BJ (cell line): ENCODE measurements at regions of chr6 and their contacts with region 1.

Region 1: GRCh38 chr6:89110284-89110683 is 7.6 kb downstream of the SRSF12 start:
- DNase-seq: no peak
- H3K4me3 ChIP-seq: no peak overlapping the region
- H3K27me3 ChIP-seq: no peaks in the 10 kb centered on the region
- CTCF ChIP-seq: no peak

Region 2: GRCh38 chr6:89098461-89098860 is 11.8 kb before region 1 on chr6:
- CTCF ChIA-PET with region 1: interaction called, 3 read pairs
- POLR2A ChIA-PET with region 1: interaction called, 19 read pairs
- DNase-seq: no peak
- H3K4me3 ChIP-seq: no peak overlapping the region
- H3K27me3 ChIP-seq: no peaks in the 10 kb centered on the region; the same call in 1 of the 2 replicates
- CTCF ChIP-seq: no peak

Region 3: GRCh38 chr6:89122625-89123024 is 12.3 kb after region 1 on chr6:
- CTCF ChIA-PET with region 1: no interaction called
- POLR2A ChIA-PET with region 1: no interaction called
- DNase-seq: no peak
- H3K4me3 ChIP-seq: no peak overlapping the region
- H3K27me3 ChIP-seq: peaks cover 5% of the 10 kb centered on the region
- CTCF ChIP-seq: peak; percentile 59